ENCODE measurements at regions of chr12 and their contacts with region 1.

Region 1: GRCh38 chr12:122028165-122028904 is 6.7 kb downstream of the BCL7A start:
- DNase-seq: peak; percentile 80
- H3K4me3 ChIP-seq: no peak overlapping the region
- H3K27ac ChIP-seq: peak overlapping the region; percentile 43
- H3K4me1 ChIP-seq: peaks cover 58% of the 10 kb centered on the region
- H3K27me3 ChIP-seq: no peaks in the 10 kb centered on the region
- CTCF ChIP-seq: no peak

Region 2: DNA sequence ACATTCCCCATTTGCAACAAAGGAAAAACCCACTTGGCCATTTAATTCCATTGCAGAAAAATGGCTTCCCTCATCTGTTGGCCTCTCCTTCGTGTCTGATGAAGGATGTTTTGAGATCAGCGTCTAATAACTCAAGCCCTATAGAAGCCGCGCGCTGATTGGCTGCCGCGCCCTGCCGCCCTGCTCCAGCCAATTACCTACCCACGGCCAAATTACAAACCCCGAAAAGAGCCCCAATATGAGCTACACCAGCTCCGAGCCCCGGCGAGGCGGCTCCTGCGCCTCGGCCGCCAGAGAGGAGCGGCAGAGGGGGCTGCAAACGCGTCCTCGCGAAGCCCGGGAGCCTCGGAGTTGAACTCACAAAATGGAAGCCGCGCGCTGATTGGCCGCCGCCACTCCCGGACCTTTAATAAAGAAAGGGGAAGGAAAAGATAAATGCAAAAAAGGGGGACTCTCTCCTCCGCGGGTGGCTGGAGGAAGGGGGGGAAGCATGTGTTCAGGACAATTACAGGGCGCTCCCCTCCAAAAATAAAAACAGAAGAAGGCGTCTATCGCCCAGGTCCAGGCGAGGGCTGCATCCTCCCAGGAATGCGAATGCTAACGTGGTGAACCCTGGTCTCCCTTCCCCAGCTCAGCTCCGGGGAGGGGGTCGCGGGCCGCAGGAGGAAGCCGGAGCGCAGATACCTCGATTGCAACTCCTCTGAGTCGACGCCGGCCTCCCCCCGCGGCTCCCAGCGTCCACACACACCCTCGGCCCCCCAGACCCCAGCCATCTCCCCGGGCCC is 225.3 kb before region 1 on chr12:
- CTCF ChIA-PET with region 1: no interaction called
- dilution Hi-C with region 1: no loop called
- in situ Hi-C with region 1: no loop called
- intact Hi-C with region 1: loop called (anchors 5 kb)
- DNase-seq: peak; percentile 92
- H3K4me3 ChIP-seq: peak overlapping the region; percentile 67 to 68 (median 67)
- H3K27ac ChIP-seq: peak overlapping the region; percentile 92
- H3K4me1 ChIP-seq: peaks cover 53% of the 10 kb centered on the region
- H3K27me3 ChIP-seq: no peaks in the 10 kb centered on the region
- CTCF ChIP-seq: no peak

Region 3: GRCh38 chr12:121942145-121942718 is 86.1 kb before region 1 on chr12:
- CTCF ChIA-PET with region 1: no interaction called
- dilution Hi-C with region 1: no loop called
- in situ Hi-C with region 1: no loop called
- intact Hi-C with region 1: no loop called
- DNase-seq: peak; percentile 71
- H3K4me3 ChIP-seq: no peak overlapping the region
- H3K27ac ChIP-seq: peak overlapping the region; percentile 93
- H3K4me1 ChIP-seq: peaks cover 31% of the 10 kb centered on the region
- H3K27me3 ChIP-seq: no peaks in the 10 kb centered on the region
- CTCF ChIP-seq: no peak

Region 4: DNA sequence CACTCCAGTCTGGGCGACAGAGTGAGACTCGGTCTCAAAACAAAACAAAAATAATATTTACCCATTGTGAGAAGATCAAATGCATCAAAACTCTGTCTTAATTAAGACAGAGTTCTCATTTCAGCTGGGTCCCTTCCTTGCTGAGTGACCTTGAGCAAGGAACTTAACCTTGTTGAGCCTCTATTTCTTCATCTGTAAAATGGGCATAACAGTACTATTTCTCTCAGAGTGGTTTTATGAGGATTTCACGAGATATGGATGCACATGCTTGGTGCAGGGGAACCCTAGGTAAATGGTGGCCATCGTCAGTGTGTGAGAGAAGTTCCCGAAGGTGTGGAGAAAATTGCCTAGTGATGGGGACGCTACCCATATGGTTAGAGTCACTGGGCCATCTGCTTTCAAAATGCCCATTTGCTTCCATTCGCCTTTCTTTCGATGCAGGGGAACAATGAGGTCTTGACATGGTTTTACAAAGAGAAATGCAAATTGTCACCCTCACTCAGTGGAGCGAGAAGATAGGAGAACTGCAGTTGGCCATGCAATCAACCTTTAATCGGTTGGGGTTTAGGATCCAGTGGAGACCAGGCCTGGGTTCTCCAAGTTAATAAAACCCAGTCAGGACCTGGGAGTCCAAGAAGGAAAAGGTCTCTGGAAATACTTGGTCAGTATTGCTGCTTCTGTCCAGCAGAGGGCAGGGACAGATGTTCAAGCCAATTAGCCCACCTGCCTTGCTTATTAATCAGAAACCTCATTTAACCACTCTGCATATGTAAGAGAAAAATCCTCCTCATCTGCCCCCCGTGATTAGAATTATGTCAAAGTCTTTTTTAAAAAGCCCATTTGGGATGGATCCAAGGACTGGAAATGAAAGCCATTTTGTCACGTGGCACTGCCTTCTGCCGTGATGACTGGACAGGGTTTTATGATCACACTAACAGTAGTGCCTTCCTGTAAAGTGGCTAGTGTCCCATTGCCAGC is 72.8 kb before region 1 on chr12:
- CTCF ChIA-PET with region 1: no interaction called
- dilution Hi-C with region 1: no loop called
- in situ Hi-C with region 1: no loop called
- intact Hi-C with region 1: loop called (anchors 1 kb)
- DNase-seq: peak; percentile 10
- H3K4me3 ChIP-seq: no peak overlapping the region
- H3K27ac ChIP-seq: no peak overlapping the region
- H3K4me1 ChIP-seq: no peaks in the 10 kb centered on the region
- H3K27me3 ChIP-seq: no peaks in the 10 kb centered on the region
- CTCF ChIP-seq: peak; percentile 61 to 72